Psoas muscle (tissue), 8 donors: ENCODE measurements at regions of chr6 and their contacts with region 1.

Region 1: GRCh38 chr6:122530440-122531046 is 58.9 kb upstream of the SERINC1 start:
- DNase-seq: no peak
- ATAC-seq: peak; percentile 79 to 95 (median 86)
- H3K4me3 ChIP-seq: no peak overlapping the region
- H3K27ac ChIP-seq: no peak overlapping the region
- H3K4me1 ChIP-seq: no peaks in the 10 kb centered on the region
- H3K27me3 ChIP-seq: no peaks in the 10 kb centered on the region
- CTCF ChIP-seq: peak; percentile 94

Region 2: GRCh38 chr6:122381497-122382265 is 148.9 kb before region 1 on chr6:
- intact Hi-C with region 1: loop called (anchors 1 to 5 kb)
- DNase-seq: peak; percentile 18 to 56
- ATAC-seq: peak; percentile 70 to 96 (median 84)
- H3K4me3 ChIP-seq: no peak overlapping the region
- H3K27ac ChIP-seq: no peak overlapping the region
- H3K4me1 ChIP-seq: no peaks in the 10 kb centered on the region
- H3K27me3 ChIP-seq: no peaks in the 10 kb centered on the region
- CTCF ChIP-seq: peak; percentile 77

Region 3: GRCh38 chr6:122491919-122492555 is 38.5 kb before region 1 on chr6:
- intact Hi-C with region 1: loop called (anchors 2 to 5 kb)
- DNase-seq: peak; percentile 49 to 69
- ATAC-seq: peak; percentile 77 to 98 (median 90)
- H3K4me3 ChIP-seq: no peak overlapping the region
- H3K27ac ChIP-seq: no peak overlapping the region
- H3K4me1 ChIP-seq: no peaks in the 10 kb centered on the region
- H3K27me3 ChIP-seq: peaks cover 0 to 2% (median 0%) of the 10 kb centered on the region in 3 donors
- CTCF ChIP-seq: peak; percentile 80